ENCODE measurements at regions of chr11 and their contacts with region 1.

Region 1: GRCh38 chr11:8006349-8006977 is 19.3 kb downstream of the EIF3F start:
- DNase-seq: peak; percentile 63
- ATAC-seq: peak; percentile 95
- H3K4me3 ChIP-seq: no peak overlapping the region
- H3K27ac ChIP-seq: no peak overlapping the region
- H3K4me1 ChIP-seq: no peaks in the 10 kb centered on the region
- H3K27me3 ChIP-seq: no peaks in the 10 kb centered on the region
- CTCF ChIP-seq: peak; percentile 93
- EP300 ChIP-seq: no peak
- POLR2A ChIP-seq: no peak
- RAD21 ChIP-seq: peak; percentile 79

Region 2: GRCh38 chr11:8070417-8071115 is 64.1 kb after region 1 on chr11:
- CTCF ChIA-PET with region 1: no interaction called
- POLR2A ChIA-PET with region 1: no interaction called
- in situ Hi-C with region 1: no loop called
- intact Hi-C with region 1: loop called (anchors 1 kb)
- DNase-seq: peak; percentile 20
- ATAC-seq: peak; percentile 60
- H3K4me3 ChIP-seq: no peak overlapping the region
- H3K27ac ChIP-seq: no peak overlapping the region
- H3K4me1 ChIP-seq: peaks cover 14% of the 10 kb centered on the region
- H3K27me3 ChIP-seq: peaks cover 0 to 36% of the 10 kb centered on the region in 2 experiments; a peak in 4 of 5 replicates
- CTCF ChIP-seq: peak; percentile 29
- EP300 ChIP-seq: no peak
- POLR2A ChIP-seq: no peak
- RAD21 ChIP-seq: no peak

Region 3: GRCh38 chr11:8092587-8093424 is 86.3 kb after region 1 on chr11:
- CTCF ChIA-PET with region 1: interaction called, 20 read pairs
- POLR2A ChIA-PET with region 1: no interaction called
- in situ Hi-C with region 1: loop called (anchors 10 kb)
- intact Hi-C with region 1: loop called (anchors 1 kb)
- DNase-seq: peak; percentile 58
- ATAC-seq: peak; percentile 84
- H3K4me3 ChIP-seq: no peak overlapping the region
- H3K27ac ChIP-seq: no peak overlapping the region
- H3K4me1 ChIP-seq: no peaks in the 10 kb centered on the region
- H3K27me3 ChIP-seq: no peaks in the 10 kb centered on the region
- CTCF ChIP-seq: peak; percentile 61
- EP300 ChIP-seq: no peak
- POLR2A ChIP-seq: no peak
- RAD21 ChIP-seq: peak; percentile 37; the same call in 1 of the 2 replicates

Region 4: DNA sequence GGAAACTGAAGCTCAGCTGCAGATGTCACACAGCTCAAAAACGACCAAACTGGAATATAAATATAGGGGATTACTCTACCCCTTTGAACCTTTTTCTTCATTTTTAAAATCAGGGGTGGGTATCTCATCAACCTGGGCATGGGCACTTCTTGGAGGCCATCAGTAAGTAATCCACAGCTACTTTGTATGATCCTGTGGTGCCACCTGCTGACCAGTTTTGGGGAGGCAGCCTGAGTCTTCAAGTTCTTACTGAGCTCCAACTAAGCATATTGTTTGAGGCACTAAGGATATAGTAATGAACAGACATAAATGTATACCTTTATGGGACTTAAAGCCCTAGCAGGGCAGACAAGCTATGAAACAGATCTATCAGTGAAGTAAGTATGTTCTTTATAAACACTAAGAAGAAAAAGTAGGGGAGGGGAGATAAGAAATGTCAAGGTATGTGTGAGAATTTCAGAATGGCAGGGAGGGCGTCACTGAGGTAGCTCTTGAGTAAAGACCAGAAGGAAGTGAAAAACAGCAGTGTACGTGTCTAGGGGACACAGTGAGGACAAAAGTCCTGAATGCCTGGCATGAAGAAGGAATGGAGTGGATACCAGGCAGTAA is 92.9 kb after region 1 on chr11:
- CTCF ChIA-PET with region 1: interaction called, 18 read pairs
- POLR2A ChIA-PET with region 1: interaction called, 4 read pairs
- in situ Hi-C with region 1: loop called (anchors 10 kb)
- intact Hi-C with region 1: loop called (anchors 1 kb)
- DNase-seq: peak; percentile 48
- ATAC-seq: peak; percentile 80
- H3K4me3 ChIP-seq: no peak overlapping the region
- H3K27ac ChIP-seq: no peak overlapping the region
- H3K4me1 ChIP-seq: no peaks in the 10 kb centered on the region
- H3K27me3 ChIP-seq: no peaks in the 10 kb centered on the region
- CTCF ChIP-seq: peak; percentile 80
- EP300 ChIP-seq: no peak
- POLR2A ChIP-seq: no peak
- RAD21 ChIP-seq: peak; percentile 68

Region 5: DNA sequence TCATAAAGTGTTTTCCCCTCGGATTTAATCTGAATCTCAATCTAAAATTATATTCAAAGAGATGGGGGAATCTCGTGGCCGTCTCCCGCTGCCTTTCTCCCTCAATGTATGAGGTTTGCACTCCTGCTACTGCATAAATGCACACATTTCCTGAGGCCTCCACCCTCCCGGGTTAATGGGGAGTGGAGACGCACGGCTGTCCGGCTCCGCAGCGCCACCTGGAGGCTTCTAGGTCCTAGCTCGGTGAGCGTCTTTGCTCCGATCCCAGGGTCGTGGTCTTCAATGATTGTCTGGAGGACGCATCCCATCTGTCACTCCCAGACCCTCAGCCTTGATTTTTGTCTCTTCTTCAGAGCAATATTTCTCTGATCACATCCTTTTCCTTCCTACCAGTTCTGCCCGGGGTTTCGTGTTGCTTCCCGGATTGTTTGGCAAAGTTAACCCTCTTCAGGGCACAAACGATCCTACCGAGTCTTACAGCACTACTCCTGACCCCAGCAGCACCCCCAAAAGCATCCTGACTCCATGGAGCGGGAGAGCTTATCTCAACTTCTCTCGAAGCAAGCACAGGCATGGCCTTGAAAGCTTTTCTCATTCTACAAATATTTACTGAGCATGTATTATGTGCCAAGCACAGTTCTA is 257.4 kb after region 1 on chr11 and contains the start of gene LMO1:
- CTCF ChIA-PET with region 1: no interaction called
- POLR2A ChIA-PET with region 1: no interaction called
- in situ Hi-C with region 1: loop called (anchors 10 kb)
- intact Hi-C with region 1: no loop called
- DNase-seq: peak; percentile 41
- ATAC-seq: peak; percentile 80
- H3K4me3 ChIP-seq: peak within 1 kb of the TSS in 1 of 3 experiments; percentile 23; a peak in 1 of 6 replicates
- H3K27ac ChIP-seq: no peak within 1 kb of the TSS
- H3K4me1 ChIP-seq: no peaks in the 10 kb centered on the region
- H3K27me3 ChIP-seq: peaks cover 12 to 85% of the 10 kb centered on the region in 2 experiments
- CTCF ChIP-seq: peak; percentile 85
- EP300 ChIP-seq: no peak
- POLR2A ChIP-seq: no peak
- RAD21 ChIP-seq: no peak
- total RNA-seq, gene LMO1: not detected in 2 replicates

Measured in HepG2 (cell line).